ENCODE measurements at regions of chr15 and their contacts with region 1.

Region 1: DNA sequence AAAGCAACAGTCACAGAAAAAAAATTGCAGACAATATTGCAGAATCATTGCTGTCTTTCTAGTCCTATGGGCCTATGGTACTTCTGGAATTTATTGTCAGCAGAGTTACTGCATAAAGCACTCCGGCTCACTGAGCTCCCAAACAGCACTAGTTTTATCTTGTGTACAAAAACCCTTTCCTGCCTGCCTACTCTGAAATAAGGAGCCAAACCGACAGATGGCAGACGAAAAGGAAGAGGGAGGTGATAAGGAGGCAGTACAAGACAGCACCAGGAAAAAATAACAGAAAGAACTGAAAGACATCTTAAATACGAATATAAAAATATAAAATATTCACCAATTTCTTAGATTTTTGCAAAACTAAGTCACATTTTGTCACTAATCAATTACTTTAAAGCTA is 15.6 kb downstream of the HERC1 start:
- DNase-seq: peak in 1 of 9 experiments; percentile 40
- ATAC-seq: peak; percentile 50
- H3K4me3 ChIP-seq: no peak overlapping the region
- H3K4me3 Mint-ChIP-seq: peak overlapping the region; percentile 48
- H3K27ac ChIP-seq: no peak overlapping the region
- H3K27ac Mint-ChIP-seq: peak overlapping the region; percentile 24
- H3K4me1 ChIP-seq: peaks cover 74% of the 10 kb centered on the region
- H3K4me1 Mint-ChIP-seq: peaks cover 79% of the 10 kb centered on the region
- H3K27me3 ChIP-seq: no peaks in the 10 kb centered on the region
- H3K27me3 Mint-ChIP-seq: no peaks in the 10 kb centered on the region
- CTCF ChIP-seq: no peak

Region 2: DNA sequence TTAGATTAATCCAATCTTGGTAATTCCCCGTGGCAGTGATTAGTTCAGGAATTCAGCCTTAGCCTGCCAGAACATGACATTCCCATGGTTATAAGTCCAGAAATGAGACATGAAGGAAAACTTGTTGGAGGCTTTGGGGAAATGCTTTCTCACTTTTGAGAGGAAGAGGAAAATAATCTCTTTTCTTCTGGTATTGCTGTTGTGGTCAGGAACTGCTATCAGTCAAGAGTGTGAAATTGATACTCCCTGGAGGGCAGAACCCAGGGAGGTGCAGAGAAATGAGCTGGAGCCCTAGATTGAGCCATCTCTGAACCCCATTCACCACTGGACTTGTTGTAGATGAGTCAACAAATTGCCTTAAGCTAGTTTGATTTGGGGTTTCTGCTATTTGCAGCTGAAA is 579.4 kb before region 1 on chr15:
- CTCF ChIA-PET with region 1: no interaction called
- POLR2A ChIA-PET with region 1: no interaction called
- intact Hi-C with region 1: no loop called
- DNase-seq: peak in 2 of 9 experiments; percentile 22 to 48
- ATAC-seq: no peak
- H3K4me3 ChIP-seq: no peak overlapping the region
- H3K4me3 Mint-ChIP-seq: no peak overlapping the region
- H3K27ac ChIP-seq: no peak overlapping the region
- H3K27ac Mint-ChIP-seq: no peak overlapping the region
- H3K4me1 ChIP-seq: peaks cover 19% of the 10 kb centered on the region
- H3K4me1 Mint-ChIP-seq: peaks cover 72% of the 10 kb centered on the region
- H3K27me3 ChIP-seq: no peaks in the 10 kb centered on the region
- H3K27me3 Mint-ChIP-seq: no peaks in the 10 kb centered on the region
- CTCF ChIP-seq: no peak

Region 3: GRCh38 chr15:63800739-63801138 is 17.5 kb before region 1 on chr15:
- CTCF ChIA-PET with region 1: interaction called, 10 read pairs
- POLR2A ChIA-PET with region 1: no interaction called
- intact Hi-C with region 1: loop called in 1 of 2 experiments (anchors 2 kb)
- DNase-seq: no peak
- ATAC-seq: no peak
- H3K4me3 ChIP-seq: no peak overlapping the region
- H3K4me3 Mint-ChIP-seq: no peak overlapping the region
- H3K27ac ChIP-seq: no peak overlapping the region
- H3K27ac Mint-ChIP-seq: no peak overlapping the region
- H3K4me1 ChIP-seq: peaks cover 35% of the 10 kb centered on the region
- H3K4me1 Mint-ChIP-seq: peaks cover 75% of the 10 kb centered on the region
- H3K27me3 ChIP-seq: no peaks in the 10 kb centered on the region
- H3K27me3 Mint-ChIP-seq: no peaks in the 10 kb centered on the region
- CTCF ChIP-seq: no peak

Region 4: DNA sequence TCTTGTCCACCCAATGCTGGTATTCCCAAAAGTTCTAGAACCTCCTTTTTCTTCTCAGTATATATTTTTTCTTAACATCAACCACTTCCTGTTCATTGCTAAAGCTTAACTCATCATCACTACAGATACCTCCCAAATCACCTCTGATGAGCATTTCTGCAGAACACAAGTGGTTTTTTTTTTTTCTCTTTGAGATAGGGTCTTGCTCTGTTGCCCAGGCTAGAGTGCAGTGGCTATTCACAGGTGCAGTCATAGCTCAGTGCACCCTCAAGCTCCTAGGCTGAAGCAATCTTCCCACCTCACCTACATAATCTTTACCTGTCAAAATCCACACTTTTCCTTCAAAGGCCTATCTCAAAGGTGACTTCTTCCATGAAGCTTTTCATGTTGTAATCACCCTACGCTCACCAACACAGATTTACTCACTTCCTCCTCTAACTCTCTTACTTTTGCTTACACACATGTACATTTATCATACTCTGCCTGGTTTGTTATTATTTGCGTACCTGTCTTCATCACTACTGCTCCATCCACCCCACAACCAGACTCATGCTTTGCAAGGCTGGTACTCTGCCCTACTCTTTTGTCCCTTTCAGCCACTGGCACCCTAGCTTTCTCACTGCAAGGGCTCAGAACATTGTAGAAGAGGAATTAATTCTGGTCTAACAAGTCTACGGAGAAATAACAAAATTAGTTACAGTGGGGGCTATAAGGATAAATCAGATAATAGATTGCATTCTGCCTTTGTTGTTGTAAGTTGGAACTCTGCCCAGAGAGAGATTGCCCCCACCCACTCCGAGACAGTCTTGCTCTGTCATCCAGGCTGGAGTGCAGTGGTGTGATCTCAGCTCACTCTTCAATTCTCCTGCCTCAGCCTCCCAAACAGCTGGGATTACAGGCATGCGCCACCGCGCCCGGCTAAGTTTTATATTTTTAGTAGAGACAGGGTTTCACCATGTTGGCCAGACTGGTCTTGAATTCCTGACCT is 11.9 kb before region 1 on chr15:
- CTCF ChIA-PET with region 1: interaction called, 10 read pairs
- POLR2A ChIA-PET with region 1: no interaction called
- intact Hi-C with region 1: loop called in 1 of 2 experiments (anchors 2 kb)
- DNase-seq: peak in 1 of 9 experiments; percentile 21
- ATAC-seq: peak; percentile 46
- H3K4me3 ChIP-seq: no peak overlapping the region
- H3K4me3 Mint-ChIP-seq: peak overlapping the region; percentile 5
- H3K27ac ChIP-seq: no peak overlapping the region
- H3K27ac Mint-ChIP-seq: peak overlapping the region; percentile 30
- H3K4me1 ChIP-seq: peaks cover 75% of the 10 kb centered on the region
- H3K4me1 Mint-ChIP-seq: peaks cover 86% of the 10 kb centered on the region
- H3K27me3 ChIP-seq: no peaks in the 10 kb centered on the region
- H3K27me3 Mint-ChIP-seq: no peaks in the 10 kb centered on the region
- CTCF ChIP-seq: no peak

Measured in CD8-positive, alpha-beta T cell (primary cell).